Dendritic cell treated with granulocyte-macrophage colony-stimulating factor and Interleukin-4, amounts not matched to agents 40 ng/mL and 50 ng/mL, for 4 days (primary cell): ENCODE measurements at regions of chrX and their contacts with region 1.

Region 1: GRCh38 chrX:30643313-30643821 is 9.9 kb upstream of the GK start:
- H3K4me3 Mint-ChIP-seq: peak overlapping the region; percentile 23
- H3K27ac Mint-ChIP-seq: peak overlapping the region; percentile 92
- H3K4me1 Mint-ChIP-seq: peaks cover 30% of the 10 kb centered on the region
- H3K27me3 Mint-ChIP-seq: no peaks in the 10 kb centered on the region

Region 2: DNA sequence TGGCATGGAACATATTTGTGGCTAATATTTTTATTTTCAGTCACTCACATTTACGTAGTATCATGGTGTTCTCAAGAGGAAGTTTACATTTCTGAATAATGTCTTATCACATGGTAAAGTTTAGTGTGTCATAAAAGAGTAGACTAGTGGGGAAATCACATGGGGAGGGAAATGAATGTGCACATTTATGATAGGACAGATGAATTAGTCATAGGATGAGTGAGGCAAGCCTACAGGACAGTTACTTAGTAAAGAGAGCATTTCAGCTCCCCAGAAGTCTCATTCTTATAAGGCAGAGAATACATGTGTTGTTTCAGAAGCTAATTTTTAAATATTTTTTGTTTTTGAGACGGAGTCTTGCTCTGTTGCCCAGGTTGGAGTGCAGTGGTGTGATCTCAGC is 16.1 kb after region 1 on chrX:
- intact Hi-C with region 1: loop called (anchors 2 kb)
- H3K4me3 Mint-ChIP-seq: no peak overlapping the region
- H3K27ac Mint-ChIP-seq: peak overlapping the region; percentile 61
- H3K4me1 Mint-ChIP-seq: peaks cover 26% of the 10 kb centered on the region
- H3K27me3 Mint-ChIP-seq: no peaks in the 10 kb centered on the region

Region 3: DNA sequence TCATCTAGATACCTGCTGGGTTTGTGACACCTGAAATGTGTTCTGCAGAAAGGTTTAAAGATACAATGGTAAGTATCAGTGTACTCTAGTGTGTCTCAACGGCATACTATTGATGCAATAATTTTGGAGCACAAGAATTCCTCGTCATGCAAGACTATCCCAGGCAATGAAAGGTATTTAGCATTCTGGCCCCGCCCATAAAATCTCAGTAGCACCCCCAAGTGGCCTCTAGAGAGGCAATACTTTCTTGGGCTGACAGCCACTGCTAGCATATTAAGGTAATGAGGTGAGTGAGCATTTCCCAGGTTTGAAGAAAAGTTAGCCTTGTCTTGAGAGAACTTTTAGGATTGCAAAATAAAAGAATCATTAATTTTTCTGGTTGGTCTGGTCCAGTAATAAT is 221.6 kb after region 1 on chrX:
- intact Hi-C with region 1: no loop called
- H3K4me3 Mint-ChIP-seq: no peak overlapping the region
- H3K27ac Mint-ChIP-seq: peak overlapping the region; percentile 88
- H3K4me1 Mint-ChIP-seq: no peaks in the 10 kb centered on the region
- H3K27me3 Mint-ChIP-seq: no peaks in the 10 kb centered on the region